A673 (cell line): ENCODE measurements at regions of chr11 and their contacts with region 1.

Region 1: DNA sequence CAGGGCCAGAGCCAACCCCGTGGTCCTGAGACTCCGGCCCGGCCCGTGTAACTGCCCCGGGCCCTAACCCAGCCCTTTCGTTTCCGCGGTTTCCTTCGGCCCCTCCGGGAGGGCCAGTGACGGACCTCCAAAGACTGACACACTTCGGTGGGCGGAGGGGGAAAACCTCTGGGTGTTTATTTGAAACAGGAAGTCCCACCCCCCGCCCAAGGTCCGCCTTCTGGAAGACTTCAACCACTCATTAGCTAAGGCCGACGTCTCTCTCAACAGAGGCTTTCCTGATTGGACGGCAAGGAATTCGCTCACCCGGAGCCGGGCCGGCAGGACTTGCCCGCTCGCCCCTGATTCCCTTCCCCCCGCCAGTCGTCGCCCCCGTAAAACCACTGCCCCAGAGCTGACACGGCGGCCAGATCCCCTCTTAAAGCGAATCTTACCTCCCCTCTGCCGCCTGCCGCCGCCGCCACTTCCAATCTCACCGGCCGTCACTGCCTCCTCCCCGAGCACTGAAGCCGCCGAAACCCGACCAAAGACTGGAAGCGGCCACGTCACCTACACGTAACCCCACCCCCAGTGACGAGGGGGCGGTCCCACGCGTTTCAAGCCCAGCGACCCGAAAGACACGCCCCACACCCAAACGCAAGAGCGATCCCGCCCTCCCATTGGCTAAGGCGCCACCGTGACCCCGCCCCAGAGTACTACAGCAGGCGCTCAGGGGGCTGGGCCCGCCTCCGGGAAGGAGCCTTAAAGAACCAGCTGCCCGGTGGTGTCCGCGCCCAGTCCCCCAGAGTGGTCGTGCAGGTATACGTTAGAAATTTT is at the start of gene STX5:
- DNase-seq: peak; percentile 100
- H3K4me3 ChIP-seq: peak within 1 kb of the TSS; percentile 70
- H3K27ac ChIP-seq: peak within 1 kb of the TSS; percentile 91
- H3K4me1 ChIP-seq: peaks cover 7% of the 10 kb centered on the region
- H3K27me3 ChIP-seq: no peaks in the 10 kb centered on the region
- CTCF ChIP-seq: no peak
- total RNA-seq, gene STX5: 29.2 and 38.1 TPM in 2 replicates

Region 2: DNA sequence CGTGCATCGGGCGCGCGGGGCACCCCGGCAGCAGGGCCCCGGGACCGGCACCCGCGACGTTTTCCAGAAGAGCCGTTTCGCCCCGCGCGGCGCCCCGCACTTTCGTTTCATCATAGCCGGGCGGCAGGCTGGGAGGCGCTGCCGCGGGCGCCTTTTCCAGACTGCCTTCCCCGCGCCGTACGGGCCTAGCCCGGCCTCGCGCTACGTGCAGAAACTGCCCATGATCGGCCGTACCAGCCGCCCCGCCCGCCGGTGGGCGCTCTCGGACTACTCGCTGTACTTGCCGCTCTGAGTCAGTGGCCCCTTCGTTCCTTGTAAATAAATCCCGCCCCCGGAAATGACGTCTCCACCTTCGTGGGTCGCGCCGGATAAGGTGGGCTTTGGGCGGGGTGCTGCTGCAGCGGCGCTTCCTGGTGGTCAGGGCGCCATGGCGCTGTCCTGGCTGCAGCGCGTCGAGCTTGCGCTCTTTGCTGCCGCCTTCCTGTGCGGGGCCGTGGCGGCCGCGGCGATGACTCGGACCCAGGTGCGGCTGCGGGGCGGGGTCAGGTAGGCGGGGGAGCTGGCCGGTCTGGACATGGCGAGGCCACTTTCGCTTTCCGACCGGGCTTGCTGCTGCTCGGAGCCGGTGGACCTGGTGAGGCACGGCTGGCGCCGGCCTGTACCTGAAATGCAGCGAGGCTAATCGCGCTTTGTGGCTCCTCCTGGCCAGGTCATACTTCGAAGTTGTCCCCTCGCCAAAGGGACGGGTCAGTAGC is 44.5 kb before region 1 on chr11 and contains the start of gene TMEM179B:
- CTCF ChIA-PET with region 1: interaction called, 7 read pairs
- POLR2A ChIA-PET with region 1: interaction called, 17 read pairs
- intact Hi-C with region 1: loop called (anchors 5 kb)
- DNase-seq: peak; percentile 100
- H3K4me3 ChIP-seq: peak within 1 kb of the TSS; percentile 74
- H3K27ac ChIP-seq: peak within 1 kb of the TSS; percentile 92
- H3K4me1 ChIP-seq: peaks cover 25% of the 10 kb centered on the region
- H3K27me3 ChIP-seq: no peaks in the 10 kb centered on the region
- CTCF ChIP-seq: peak; percentile 64
- total RNA-seq, gene TMEM179B: 46.6 and 52.1 TPM in 2 replicates

Region 3: DNA sequence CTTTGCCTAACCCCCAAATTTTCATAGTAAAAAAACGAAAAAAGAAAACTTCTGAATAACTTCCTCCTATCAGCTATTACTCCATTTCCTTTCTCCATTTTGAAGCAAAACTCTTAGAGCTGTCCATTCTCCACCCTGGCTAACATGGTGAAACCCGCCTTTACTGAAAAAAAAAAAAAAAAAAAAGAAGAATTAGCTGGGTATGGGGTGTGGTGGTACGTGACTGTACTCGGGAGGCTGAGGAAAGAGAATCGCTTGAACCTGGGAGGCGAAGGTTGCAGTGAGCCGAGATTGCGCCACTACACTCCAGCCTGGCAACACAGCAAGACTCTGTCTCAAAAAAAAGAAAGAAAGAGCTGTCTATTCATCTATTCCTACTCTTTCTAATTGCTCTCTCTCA is 15.2 kb before region 1 on chr11:
- CTCF ChIA-PET with region 1: no interaction called
- POLR2A ChIA-PET with region 1: interaction called, 10 read pairs
- intact Hi-C with region 1: no loop called
- DNase-seq: no peak
- H3K4me3 ChIP-seq: no peak overlapping the region
- H3K27ac ChIP-seq: no peak overlapping the region
- H3K4me1 ChIP-seq: no peaks in the 10 kb centered on the region
- H3K27me3 ChIP-seq: no peaks in the 10 kb centered on the region
- CTCF ChIP-seq: no peak

Region 4: DNA sequence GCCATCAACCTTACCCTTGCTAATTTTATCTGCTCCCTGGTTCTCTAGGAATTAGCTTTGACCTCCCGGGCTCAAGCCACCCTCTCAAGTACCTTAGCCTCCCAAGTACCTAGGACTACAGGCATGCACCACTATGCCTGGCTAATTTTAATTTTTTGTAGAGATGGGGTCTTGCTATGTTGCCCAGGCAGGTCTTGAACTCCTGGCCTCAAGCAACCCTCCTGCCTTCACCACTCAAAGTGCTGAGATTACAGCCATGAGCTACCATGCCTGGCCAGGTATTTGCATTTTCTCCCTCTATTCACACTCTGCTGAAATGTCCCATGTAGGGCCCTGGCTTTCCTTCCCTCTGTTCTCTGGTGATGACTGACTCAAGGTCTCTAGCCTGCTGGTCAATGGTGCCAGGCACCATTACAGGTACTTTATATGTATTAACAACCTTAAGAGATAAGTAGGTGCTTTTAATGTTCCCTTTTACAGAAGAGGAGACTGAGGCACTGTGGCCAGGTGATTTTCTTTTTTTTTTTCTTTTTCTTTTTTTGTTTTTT is 16.1 kb after region 1 on chr11:
- CTCF ChIA-PET with region 1: no interaction called
- POLR2A ChIA-PET with region 1: no interaction called
- intact Hi-C with region 1: no loop called
- DNase-seq: no peak
- H3K4me3 ChIP-seq: no peak overlapping the region
- H3K27ac ChIP-seq: no peak overlapping the region
- H3K4me1 ChIP-seq: peaks cover 6% of the 10 kb centered on the region
- H3K27me3 ChIP-seq: no peaks in the 10 kb centered on the region
- CTCF ChIP-seq: no peak